ENCODE measurements at regions of chr10 and their contacts with region 1.

Region 1: GRCh38 chr10:101222683-101223273 is 6.5 kb downstream of the LBX1 start:
- DNase-seq: no peak
- H3K4me3 Mint-ChIP-seq: no peak overlapping the region
- H3K27ac Mint-ChIP-seq: no peak overlapping the region
- H3K4me1 Mint-ChIP-seq: peaks cover 18% of the 10 kb centered on the region
- H3K27me3 Mint-ChIP-seq: peaks cover 31% of the 10 kb centered on the region
- CTCF ChIP-seq: no peak

Region 2: GRCh38 chr10:101291331-101292193 is 68.8 kb after region 1 on chr10:
- CTCF ChIA-PET with region 1: interaction called, 21 read pairs
- POLR2A ChIA-PET with region 1: no interaction called
- intact Hi-C with region 1: no loop called
- DNase-seq: peak; percentile 34
- H3K4me3 Mint-ChIP-seq: peak overlapping the region; percentile 71
- H3K27ac Mint-ChIP-seq: no peak overlapping the region
- H3K4me1 Mint-ChIP-seq: peaks cover 7% of the 10 kb centered on the region
- H3K27me3 Mint-ChIP-seq: peaks cover 39% of the 10 kb centered on the region
- CTCF ChIP-seq: peak; percentile 69

Region 3: GRCh38 chr10:101323495-101323894 is 100.7 kb after region 1 on chr10:
- CTCF ChIA-PET with region 1: no interaction called
- POLR2A ChIA-PET with region 1: no interaction called
- intact Hi-C with region 1: no loop called
- DNase-seq: no peak
- H3K4me3 Mint-ChIP-seq: no peak overlapping the region
- H3K27ac Mint-ChIP-seq: no peak overlapping the region
- H3K4me1 Mint-ChIP-seq: no peaks in the 10 kb centered on the region
- H3K27me3 Mint-ChIP-seq: peaks cover 42% of the 10 kb centered on the region
- CTCF ChIP-seq: no peak

Region 4: DNA sequence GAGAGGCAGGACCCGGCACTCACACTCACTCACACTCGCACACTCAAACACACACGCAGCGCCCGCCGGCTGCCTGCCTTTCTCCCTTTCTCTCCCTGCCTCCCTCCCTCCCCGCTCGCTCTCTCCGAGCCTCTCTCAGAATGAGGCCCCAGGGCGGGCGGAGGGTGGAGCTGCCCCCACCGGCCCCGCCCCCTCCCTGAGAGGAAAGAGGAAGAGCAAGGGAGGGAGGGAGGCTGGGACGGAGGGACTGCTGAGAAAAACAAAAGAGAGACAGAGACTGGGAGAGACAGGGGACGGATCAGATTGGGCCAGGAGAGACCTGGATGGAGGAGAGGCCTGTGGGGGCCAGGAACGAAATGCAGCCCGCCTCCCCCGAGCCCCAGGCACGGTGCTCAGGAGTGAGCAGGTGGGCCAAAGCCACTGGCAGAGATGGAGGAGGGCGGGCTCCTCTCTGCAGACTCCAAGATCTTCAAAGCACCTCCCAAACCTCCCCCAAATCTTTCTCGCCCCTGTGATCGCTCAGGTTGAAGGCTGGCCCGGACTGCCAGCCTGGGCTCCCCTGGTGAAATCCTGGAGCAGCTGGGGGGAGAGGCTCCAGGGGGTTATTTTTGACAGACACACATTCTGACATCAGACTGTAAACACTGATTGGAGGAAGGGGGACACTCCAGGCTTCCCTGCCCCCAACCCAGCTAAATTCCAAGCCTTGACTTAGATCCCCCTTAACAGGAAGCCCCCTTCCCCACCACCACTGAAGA is 892.3 kb after region 1 on chr10:
- CTCF ChIA-PET with region 1: no interaction called
- POLR2A ChIA-PET with region 1: no interaction called
- intact Hi-C with region 1: no loop called
- DNase-seq: peak; percentile 93
- H3K4me3 Mint-ChIP-seq: peak overlapping the region; percentile 92
- H3K27ac Mint-ChIP-seq: peak overlapping the region; percentile 92
- H3K4me1 Mint-ChIP-seq: peaks cover 59% of the 10 kb centered on the region
- H3K27me3 Mint-ChIP-seq: no peaks in the 10 kb centered on the region
- CTCF ChIP-seq: no peak